Left cardiac atrium (tissue), 4 donors: ENCODE measurements at regions of chr1 and their contacts with region 1.

Region 1: DNA sequence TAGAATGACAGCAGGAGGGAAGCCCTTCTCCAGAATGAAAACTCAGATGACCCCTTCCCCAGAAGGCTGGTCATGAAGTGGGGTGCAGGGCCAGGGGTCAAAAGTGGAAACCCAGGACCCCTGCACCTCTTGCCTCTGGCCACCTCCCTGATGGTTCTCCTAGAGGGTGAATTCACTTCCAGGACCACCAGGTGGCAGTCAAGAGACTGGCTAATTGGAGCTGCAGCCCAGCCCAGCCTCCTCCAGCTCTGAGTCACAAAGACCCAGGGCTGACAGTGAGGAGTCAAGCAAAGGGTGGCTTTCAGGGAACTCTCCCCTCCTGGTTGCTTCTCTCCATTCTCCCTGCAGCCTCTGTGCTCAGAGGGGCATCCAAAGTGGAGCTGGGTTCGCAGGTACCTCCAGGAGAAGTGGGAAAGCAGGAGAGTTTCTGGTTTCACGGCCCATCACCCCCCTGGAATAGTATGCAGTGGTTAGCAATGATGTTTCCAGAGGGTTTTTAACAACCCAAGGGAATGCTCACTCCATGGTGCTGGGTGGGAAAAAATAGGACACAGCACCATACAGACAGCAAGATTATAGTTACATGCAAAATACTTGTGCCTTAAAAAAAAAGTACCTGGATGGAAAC is 6.1 kb upstream of the EPHB2 start:
- DNase-seq: peak; percentile 87
- ATAC-seq: peak; percentile 92 to 93

Region 2: GRCh38 chr1:22728751-22729399 is 24.3 kb after region 1 on chr1:
- intact Hi-C with region 1: no loop called
- DNase-seq: no peak
- ATAC-seq: no peak

Region 3: GRCh38 chr1:22889213-22889827 is 184.8 kb after region 1 on chr1:
- intact Hi-C with region 1: loop called (anchors 5 to 10 kb)
- DNase-seq: no peak
- ATAC-seq: peak in 1 of 2 donors; percentile 52

Region 4: GRCh38 chr1:22922640-22923039 is 218.1 kb after region 1 on chr1:
- intact Hi-C with region 1: loop called in 1 of 2 experiments (anchors 10 kb)
- DNase-seq: no peak
- ATAC-seq: no peak

Region 5: GRCh38 chr1:22930235-22930912 is 225.8 kb after region 1 on chr1:
- intact Hi-C with region 1: loop called (anchors 5 to 10 kb)
- DNase-seq: peak; percentile 50
- ATAC-seq: peak; percentile 81 to 83